ENCODE measurements at regions of chr10 and their contacts with region 1.

Region 1: DNA sequence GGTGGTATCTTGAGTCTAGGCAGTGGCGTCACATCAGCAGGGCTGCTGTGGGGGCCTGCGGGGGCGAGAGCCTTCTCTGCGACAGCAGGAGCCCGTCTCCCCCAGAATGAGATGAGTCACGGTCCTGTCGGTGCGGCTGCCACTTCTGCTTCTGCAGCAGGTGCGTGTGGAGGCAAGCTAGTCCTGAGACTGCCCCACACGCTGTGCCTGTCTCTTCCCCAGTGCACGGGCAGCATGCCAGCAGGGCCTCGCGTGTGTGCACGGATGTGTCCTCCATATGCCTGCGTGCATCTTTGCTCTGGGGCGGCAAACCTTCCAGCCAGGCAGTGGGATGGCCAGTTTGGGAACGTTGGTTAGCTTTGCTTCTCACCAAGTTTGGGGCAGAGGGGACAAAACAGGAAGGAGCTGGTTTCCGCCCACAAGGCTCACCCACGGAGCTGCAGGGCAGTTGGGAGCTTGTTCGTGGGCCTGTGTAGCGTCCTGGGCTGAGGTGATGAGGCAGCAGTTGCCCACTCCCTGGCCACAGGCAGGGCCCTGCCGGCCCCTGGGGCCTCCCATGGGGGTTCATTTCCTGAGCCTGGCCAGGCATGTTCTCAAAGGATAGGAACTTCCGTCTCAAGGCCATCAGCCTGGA is 60.8 kb upstream of the PPIF start:
- DNase-seq: peak; percentile 52 to 94 (median 79)
- H3K4me3 ChIP-seq: peak overlapping the region in 1 of 2 donors; percentile 20
- H3K4me3 Mint-ChIP-seq: peak overlapping the region; percentile 7 to 91 (median 81)
- H3K27ac ChIP-seq: peak overlapping the region; percentile 54
- H3K27ac Mint-ChIP-seq: peak overlapping the region; percentile 89 to 96 (median 93)
- H3K4me1 ChIP-seq: peaks cover 41% of the 10 kb centered on the region
- H3K4me1 Mint-ChIP-seq: peaks cover 33 to 61% (median 38%) of the 10 kb centered on the region in 4 donors
- H3K27me3 ChIP-seq: no peaks in the 10 kb centered on the region
- H3K27me3 Mint-ChIP-seq: no peaks in the 10 kb centered on the region

Region 2: DNA sequence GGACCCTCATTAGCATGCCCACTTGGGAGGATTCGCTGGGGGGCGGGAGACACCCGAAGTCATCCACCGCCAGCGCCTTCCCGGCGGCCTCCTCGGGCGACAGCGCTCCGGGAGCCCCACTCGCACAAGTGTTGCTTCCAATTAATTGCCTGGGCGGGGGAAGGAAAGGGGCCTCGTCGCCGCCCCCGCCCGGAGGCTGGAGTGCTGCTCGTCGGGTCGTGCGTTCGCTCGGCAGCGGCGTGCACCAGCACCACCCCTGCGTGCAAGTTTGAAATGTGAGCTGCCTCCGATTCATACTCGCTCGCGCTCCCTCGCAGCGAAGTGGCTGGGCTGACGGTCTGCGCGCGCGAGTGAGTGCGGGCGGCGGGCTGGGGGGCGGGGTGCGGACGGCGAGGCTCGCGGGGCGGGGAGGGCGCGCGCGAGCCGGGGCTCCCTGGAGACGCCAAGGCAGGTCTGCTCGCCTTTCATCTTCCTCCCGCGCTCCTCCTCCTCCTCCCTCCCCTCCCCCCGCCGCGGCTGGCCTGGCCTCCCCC is 43.7 kb before region 1 on chr10:
- CTCF ChIA-PET with region 1: no interaction called
- POLR2A ChIA-PET with region 1: interaction called, 5 read pairs
- intact Hi-C with region 1: loop called (anchors 2 kb)
- DNase-seq: peak; percentile 31 to 70 (median 39)
- H3K4me3 ChIP-seq: peak overlapping the region in 1 of 2 donors; percentile 52
- H3K4me3 Mint-ChIP-seq: peak overlapping the region in 7 of 8 donors; percentile 31 to 81 (median 58)
- H3K27ac ChIP-seq: no peak overlapping the region
- H3K27ac Mint-ChIP-seq: peak overlapping the region in 1 of 7 donors; percentile 78
- H3K4me1 ChIP-seq: peaks cover 49% of the 10 kb centered on the region
- H3K4me1 Mint-ChIP-seq: peaks cover 30 to 53% (median 44%) of the 10 kb centered on the region in 4 donors
- H3K27me3 ChIP-seq: no peaks in the 10 kb centered on the region
- H3K27me3 Mint-ChIP-seq: no peaks in the 10 kb centered on the region

Region 3: DNA sequence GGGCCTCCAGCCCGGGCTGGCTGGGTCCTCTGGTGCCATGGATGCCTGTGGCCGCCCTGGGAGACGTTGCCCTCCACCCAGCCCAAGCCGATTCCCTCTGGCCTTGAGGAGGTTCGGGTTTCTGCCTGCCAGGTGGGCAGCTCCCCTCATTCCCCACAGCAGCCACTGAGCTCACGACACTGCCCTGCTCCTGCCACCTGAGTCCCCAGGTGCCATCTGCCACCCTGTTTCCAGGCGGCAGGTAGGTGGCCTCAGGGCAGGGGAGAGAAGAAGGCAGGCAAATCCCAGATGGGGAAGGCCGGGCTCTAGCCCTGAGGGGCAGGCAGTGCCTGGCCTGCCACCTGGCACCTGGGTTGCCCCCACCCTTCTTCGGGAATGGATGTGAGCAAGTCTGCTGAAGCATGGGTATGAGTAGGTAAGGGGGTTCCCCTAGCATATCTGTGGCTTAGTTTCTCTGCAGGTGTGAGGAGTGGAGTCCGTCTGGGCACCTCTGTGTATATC is 31.4 kb before region 1 on chr10:
- CTCF ChIA-PET with region 1: no interaction called
- POLR2A ChIA-PET with region 1: no interaction called
- intact Hi-C with region 1: no loop called
- DNase-seq: no peak
- H3K4me3 ChIP-seq: no peak overlapping the region
- H3K4me3 Mint-ChIP-seq: no peak overlapping the region
- H3K27ac ChIP-seq: no peak overlapping the region
- H3K27ac Mint-ChIP-seq: peak overlapping the region in 1 of 7 donors; percentile 35
- H3K4me1 ChIP-seq: peaks cover 7% of the 10 kb centered on the region
- H3K4me1 Mint-ChIP-seq: peaks cover 6 to 23% (median 12%) of the 10 kb centered on the region in 4 donors
- H3K27me3 ChIP-seq: no peaks in the 10 kb centered on the region
- H3K27me3 Mint-ChIP-seq: no peaks in the 10 kb centered on the region

Region 4: DNA sequence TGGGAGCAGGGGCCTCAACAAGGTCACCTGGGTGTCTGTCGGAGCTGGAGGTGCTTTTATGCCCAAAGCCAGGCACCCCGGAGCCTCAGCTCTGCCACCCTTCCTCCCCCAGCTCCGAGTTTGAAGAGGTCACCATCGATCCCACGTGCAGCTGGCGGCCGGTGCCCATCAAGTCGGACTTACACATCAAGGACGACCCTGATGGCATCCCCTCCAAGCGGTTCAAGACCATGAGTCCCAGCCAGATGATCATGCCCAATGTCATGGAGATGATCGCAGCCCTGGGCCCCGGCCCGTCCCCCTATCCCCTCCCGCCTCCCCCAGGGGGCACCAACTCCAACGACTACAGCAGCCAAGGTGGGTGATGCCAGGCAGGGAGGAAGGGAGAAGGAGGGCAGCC is 19.6 kb after region 1 on chr10:
- CTCF ChIA-PET with region 1: no interaction called
- POLR2A ChIA-PET with region 1: no interaction called
- intact Hi-C with region 1: no loop called
- DNase-seq: no peak
- H3K4me3 ChIP-seq: no peak overlapping the region
- H3K4me3 Mint-ChIP-seq: no peak overlapping the region
- H3K27ac ChIP-seq: no peak overlapping the region
- H3K27ac Mint-ChIP-seq: no peak overlapping the region
- H3K4me1 ChIP-seq: no peaks in the 10 kb centered on the region
- H3K4me1 Mint-ChIP-seq: no peaks in the 10 kb centered on the region
- H3K27me3 ChIP-seq: no peaks in the 10 kb centered on the region
- H3K27me3 Mint-ChIP-seq: no peaks in the 10 kb centered on the region

Region 5: DNA sequence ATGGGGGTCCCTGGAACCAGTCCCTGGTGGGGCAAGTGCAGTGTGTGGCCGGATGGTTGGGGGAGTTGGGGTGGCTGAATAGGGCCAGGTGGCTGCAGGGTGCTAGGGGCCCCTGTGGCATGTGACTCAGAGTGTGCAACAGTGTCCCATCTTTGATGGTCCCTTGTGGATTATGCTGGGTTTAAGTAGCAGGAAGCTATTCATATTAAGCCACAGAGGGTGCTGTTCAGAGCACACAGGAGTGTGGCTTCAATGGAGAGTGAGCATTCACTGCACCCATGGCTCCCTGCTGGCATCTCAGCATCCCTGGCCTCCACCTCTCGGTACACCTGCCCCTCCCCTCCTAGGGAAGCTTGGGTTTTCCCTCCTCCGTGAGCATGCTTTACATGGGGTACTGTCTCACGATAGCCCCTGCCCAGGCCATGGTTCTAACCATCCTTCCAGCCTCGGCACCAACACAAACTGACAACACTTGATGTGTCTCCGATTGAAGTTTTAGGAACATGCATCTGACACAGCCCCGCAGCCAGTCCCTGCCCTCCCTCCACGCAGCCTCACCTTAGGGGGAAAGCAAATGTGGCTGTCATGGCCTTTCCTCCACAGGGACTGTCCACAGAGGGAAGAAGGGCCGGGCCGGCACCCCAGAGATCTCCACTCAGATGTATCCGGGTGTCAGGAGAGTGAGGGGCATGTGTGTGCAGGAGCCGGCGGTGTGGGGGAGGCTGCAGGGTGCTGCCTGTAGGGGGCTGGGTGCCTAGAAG is 30.4 kb after region 1 on chr10:
- CTCF ChIA-PET with region 1: interaction called, 3 read pairs
- POLR2A ChIA-PET with region 1: interaction called, 25 read pairs
- intact Hi-C with region 1: loop called (anchors 1 kb)
- DNase-seq: peak in 2 of 5 donors; percentile 8 to 26
- H3K4me3 ChIP-seq: peak overlapping the region in 1 of 2 donors; percentile 27
- H3K4me3 Mint-ChIP-seq: peak overlapping the region; percentile 73 to 87 (median 82)
- H3K27ac ChIP-seq: no peak overlapping the region
- H3K27ac Mint-ChIP-seq: peak overlapping the region in 6 of 7 donors; percentile 61 to 97 (median 94)
- H3K4me1 ChIP-seq: peaks cover 67% of the 10 kb centered on the region
- H3K4me1 Mint-ChIP-seq: peaks cover 55 to 69% (median 60%) of the 10 kb centered on the region in 4 donors
- H3K27me3 ChIP-seq: no peaks in the 10 kb centered on the region
- H3K27me3 Mint-ChIP-seq: peaks cover 1 to 4% of the 10 kb centered on the region in 2 donors

Region 6: DNA sequence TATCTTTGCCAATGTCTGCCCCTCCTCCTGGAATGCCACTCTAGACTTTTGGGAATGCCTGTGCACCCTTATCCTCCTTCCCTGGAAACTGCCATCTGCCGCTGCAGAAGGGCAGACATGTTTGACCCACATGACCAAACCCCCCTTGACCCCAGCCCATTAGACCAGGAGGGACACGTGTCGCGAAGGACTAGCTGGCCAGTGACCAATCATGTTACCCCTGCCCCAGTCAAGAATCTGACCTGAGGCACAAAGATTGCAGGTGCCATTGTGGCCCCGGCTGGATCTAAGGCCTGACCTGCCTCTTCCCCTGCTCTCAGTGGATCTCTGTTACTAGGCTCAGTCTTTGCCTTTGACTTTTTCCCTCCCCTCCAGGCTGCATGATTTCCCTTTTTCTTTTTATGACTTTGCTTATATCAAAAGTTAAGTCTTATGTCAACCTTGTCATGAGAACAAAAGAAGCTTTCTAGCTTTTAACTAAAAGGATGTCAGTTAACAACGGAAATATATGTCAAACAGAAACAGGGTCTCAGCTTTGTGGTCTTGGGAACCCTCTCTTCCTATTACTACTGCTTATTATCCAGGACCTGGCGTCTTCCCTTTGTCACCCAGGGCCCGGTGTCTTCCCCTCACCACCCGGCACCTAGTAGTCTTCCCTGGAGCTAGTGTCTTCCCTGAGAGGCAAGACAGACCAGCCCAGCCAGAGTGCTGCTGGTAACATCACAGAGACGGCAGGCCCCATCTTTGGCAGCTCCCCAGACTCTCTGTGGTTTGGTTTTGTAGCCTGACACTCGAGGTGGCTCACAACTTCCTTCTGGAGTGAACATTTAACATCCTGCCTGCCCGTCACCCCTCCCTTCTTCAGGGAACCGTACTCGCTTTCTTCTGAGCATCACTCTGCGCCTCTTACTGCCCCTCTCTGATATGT is 36.4 kb after region 1 on chr10:
- CTCF ChIA-PET with region 1: interaction called, 6 read pairs
- POLR2A ChIA-PET with region 1: interaction called, 25 read pairs
- intact Hi-C with region 1: loop called (anchors 1 kb)
- DNase-seq: peak; percentile 85 to 94 (median 88)
- H3K4me3 ChIP-seq: peak overlapping the region; percentile 8 to 41
- H3K4me3 Mint-ChIP-seq: peak overlapping the region; percentile 41 to 91 (median 85)
- H3K27ac ChIP-seq: peak overlapping the region; percentile 37
- H3K27ac Mint-ChIP-seq: peak overlapping the region; percentile 92 to 98 (median 96)
- H3K4me1 ChIP-seq: peaks cover 88% of the 10 kb centered on the region
- H3K4me1 Mint-ChIP-seq: peaks cover 58 to 68% (median 65%) of the 10 kb centered on the region in 4 donors
- H3K27me3 ChIP-seq: no peaks in the 10 kb centered on the region
- H3K27me3 Mint-ChIP-seq: no peaks in the 10 kb centered on the region

Region 7: DNA sequence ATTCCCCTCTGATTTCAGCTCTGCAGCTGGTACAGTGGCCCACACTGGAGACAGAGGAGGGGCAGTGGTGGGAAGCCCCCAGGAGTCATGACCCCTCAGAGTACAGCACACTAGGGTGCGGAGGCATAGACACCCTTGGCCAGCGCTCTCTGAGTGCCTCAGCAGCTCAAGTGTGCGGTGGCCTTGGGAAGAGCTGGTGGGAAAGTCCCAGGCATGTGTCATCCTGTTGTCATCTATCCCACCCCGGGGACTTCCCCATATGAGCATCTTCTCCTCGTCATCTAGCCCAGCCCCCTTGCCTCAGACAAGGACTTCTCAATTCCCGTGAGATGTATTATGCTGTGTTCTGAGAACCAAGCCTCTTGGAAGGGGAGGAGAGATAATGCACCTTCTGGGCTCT is 45.3 kb after region 1 on chr10:
- CTCF ChIA-PET with region 1: no interaction called
- POLR2A ChIA-PET with region 1: interaction called, 8 read pairs
- intact Hi-C with region 1: loop called (anchors 1 kb)
- DNase-seq: peak; percentile 54 to 93 (median 65)
- H3K4me3 ChIP-seq: no peak overlapping the region
- H3K4me3 Mint-ChIP-seq: peak overlapping the region in 6 of 8 donors; percentile 21 to 67 (median 42)
- H3K27ac ChIP-seq: peak overlapping the region; percentile 29
- H3K27ac Mint-ChIP-seq: peak overlapping the region; percentile 76 to 95 (median 89)
- H3K4me1 ChIP-seq: peaks cover 20% of the 10 kb centered on the region
- H3K4me1 Mint-ChIP-seq: peaks cover 18 to 31% (median 20%) of the 10 kb centered on the region in 4 donors
- H3K27me3 ChIP-seq: no peaks in the 10 kb centered on the region
- H3K27me3 Mint-ChIP-seq: no peaks in the 10 kb centered on the region

Region 8: DNA sequence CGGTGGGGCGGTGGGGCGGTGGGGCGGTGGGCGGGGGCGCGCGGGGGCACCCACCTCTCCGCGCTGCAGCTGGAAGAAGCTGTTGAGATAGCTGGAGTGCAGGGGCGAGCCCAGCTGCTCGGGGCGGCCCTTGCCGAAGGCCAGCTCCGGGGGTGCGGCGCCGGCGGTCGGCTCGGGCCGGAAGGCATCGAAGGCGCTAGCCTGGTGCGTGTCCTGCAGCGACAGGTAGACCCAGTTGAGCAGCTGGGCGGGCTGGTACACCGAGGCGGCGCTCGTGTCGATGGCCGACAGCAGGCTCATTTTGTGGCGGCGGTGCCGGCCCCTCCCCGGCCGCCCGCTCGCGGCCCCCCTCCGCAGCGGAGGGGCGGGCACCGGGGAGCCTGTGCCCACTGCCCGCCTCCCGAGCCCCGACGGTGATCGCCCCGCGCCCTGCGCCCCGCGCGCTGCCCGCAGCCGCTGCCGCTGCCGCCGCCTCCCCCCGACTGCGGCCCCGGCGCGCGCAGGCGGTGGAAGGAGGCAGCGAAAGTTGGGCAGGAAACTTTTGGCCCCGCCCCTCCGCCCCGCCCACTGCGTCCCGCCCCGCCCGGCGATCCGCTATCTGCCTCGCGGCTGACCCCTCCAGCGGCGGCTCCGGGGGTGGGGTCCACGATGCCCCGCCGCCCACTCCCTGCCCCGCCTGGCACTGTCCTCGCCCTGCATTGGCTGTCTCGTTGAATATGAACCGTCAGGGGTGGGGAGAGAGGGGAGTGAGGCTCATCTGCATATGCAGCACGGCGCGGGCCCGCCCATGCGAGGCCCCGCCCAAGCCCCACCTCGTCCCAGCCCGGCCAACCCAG is 158.9 kb after region 1 on chr10 and contains the start of gene ZCCHC24:
- CTCF ChIA-PET with region 1: no interaction called
- POLR2A ChIA-PET with region 1: interaction called, 3 read pairs
- intact Hi-C with region 1: loop called (anchors 10 kb)
- DNase-seq: peak; percentile 95 to 97 (median 97)
- H3K4me3 ChIP-seq: peak within 1 kb of the TSS; percentile 63 to 64
- H3K4me3 Mint-ChIP-seq: peak within 1 kb of the TSS; percentile 87 to 98 (median 90)
- H3K27ac ChIP-seq: peak within 1 kb of the TSS; percentile 57
- H3K27ac Mint-ChIP-seq: peak within 1 kb of the TSS; percentile 85 to 98 (median 91)
- H3K4me1 ChIP-seq: peaks cover 21% of the 10 kb centered on the region
- H3K4me1 Mint-ChIP-seq: peaks cover 17 to 34% (median 23%) of the 10 kb centered on the region in 4 donors
- H3K27me3 ChIP-seq: no peaks in the 10 kb centered on the region
- H3K27me3 Mint-ChIP-seq: no peaks in the 10 kb centered on the region
- total RNA-seq, gene ZCCHC24: 1.7 to 1.9 TPM